A673 (cell line): ENCODE measurements at regions of chr4 and their contacts with region 1.

Region 1: GRCh38 chr4:122758033-122758432 is 25.5 kb downstream of the BBS12 start:
- DNase-seq: peak; percentile 62
- H3K4me3 ChIP-seq: no peak overlapping the region
- H3K27ac ChIP-seq: no peak overlapping the region
- H3K4me1 ChIP-seq: peaks cover 5% of the 10 kb centered on the region
- H3K27me3 ChIP-seq: no peaks in the 10 kb centered on the region
- CTCF ChIP-seq: peak; percentile 81

Region 2: DNA sequence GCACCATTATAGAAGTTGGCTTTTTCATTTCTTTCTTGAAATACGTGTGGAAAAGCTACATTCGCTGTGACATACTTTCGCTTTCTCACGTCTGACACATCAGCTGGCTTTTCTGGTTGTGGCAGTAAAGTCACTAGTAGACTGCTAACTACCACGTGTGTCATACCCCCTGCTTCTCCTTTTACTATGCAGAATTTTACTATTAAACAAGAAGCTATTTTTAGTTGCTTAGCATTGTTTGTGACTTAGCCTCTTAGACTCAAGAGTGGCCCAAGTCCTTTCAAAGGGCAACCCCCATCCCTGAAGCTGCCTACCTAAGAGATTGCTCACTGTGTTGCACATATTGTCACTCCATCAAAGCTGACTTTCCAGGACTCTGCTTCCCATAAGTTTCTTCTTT is 299.4 kb before region 1 on chr4:
- CTCF ChIA-PET with region 1: no interaction called
- POLR2A ChIA-PET with region 1: no interaction called
- intact Hi-C with region 1: no loop called
- DNase-seq: no peak
- H3K4me3 ChIP-seq: no peak overlapping the region
- H3K27ac ChIP-seq: no peak overlapping the region
- H3K4me1 ChIP-seq: no peaks in the 10 kb centered on the region
- H3K27me3 ChIP-seq: no peaks in the 10 kb centered on the region
- CTCF ChIP-seq: no peak

Region 3: GRCh38 chr4:122914292-122914904 is 156.4 kb after region 1 on chr4:
- CTCF ChIA-PET with region 1: interaction called, 8 read pairs
- POLR2A ChIA-PET with region 1: no interaction called
- intact Hi-C with region 1: loop called (anchors 2 kb)
- DNase-seq: peak; percentile 44
- H3K4me3 ChIP-seq: no peak overlapping the region
- H3K27ac ChIP-seq: no peak overlapping the region
- H3K4me1 ChIP-seq: peaks cover 7% of the 10 kb centered on the region
- H3K27me3 ChIP-seq: no peaks in the 10 kb centered on the region
- CTCF ChIP-seq: peak; percentile 54